ENCODE measurements at regions of chr5 and their contacts with region 1.

Region 1: GRCh38 chr5:17276445-17276844 is 59.0 kb downstream of the BASP1 start:
- DNase-seq: no peak
- ATAC-seq: no peak
- H3K4me3 Mint-ChIP-seq: peak overlapping the region; percentile 55
- H3K27ac Mint-ChIP-seq: peak overlapping the region; percentile 94
- H3K4me1 Mint-ChIP-seq: peaks cover 87% of the 10 kb centered on the region
- H3K27me3 Mint-ChIP-seq: no peaks in the 10 kb centered on the region
- CTCF ChIP-seq: no peak

Region 2: GRCh38 chr5:17228821-17229291 is 47.6 kb before region 1 on chr5:
- CTCF ChIA-PET with region 1: no interaction called
- POLR2A ChIA-PET with region 1: interaction called, 21 read pairs
- intact Hi-C with region 1: loop called (anchors 1 kb)
- DNase-seq: no peak
- ATAC-seq: peak; percentile 13
- H3K4me3 Mint-ChIP-seq: peak overlapping the region; percentile 63
- H3K27ac Mint-ChIP-seq: peak overlapping the region; percentile 92
- H3K4me1 Mint-ChIP-seq: peaks cover 92% of the 10 kb centered on the region
- H3K27me3 Mint-ChIP-seq: no peaks in the 10 kb centered on the region
- CTCF ChIP-seq: no peak

Region 3: GRCh38 chr5:17326600-17327037 is 50.2 kb after region 1 on chr5:
- CTCF ChIA-PET with region 1: no interaction called
- POLR2A ChIA-PET with region 1: no interaction called
- intact Hi-C with region 1: no loop called
- DNase-seq: no peak
- ATAC-seq: no peak
- H3K4me3 Mint-ChIP-seq: no peak overlapping the region
- H3K27ac Mint-ChIP-seq: no peak overlapping the region
- H3K4me1 Mint-ChIP-seq: no peaks in the 10 kb centered on the region
- H3K27me3 Mint-ChIP-seq: no peaks in the 10 kb centered on the region
- CTCF ChIP-seq: no peak

Region 4: GRCh38 chr5:17359451-17360011 is 83.1 kb after region 1 on chr5:
- CTCF ChIA-PET with region 1: interaction called, 6 read pairs
- POLR2A ChIA-PET with region 1: interaction called, 21 read pairs
- intact Hi-C with region 1: loop called (anchors 1 kb)
- DNase-seq: no peak
- ATAC-seq: no peak
- H3K4me3 Mint-ChIP-seq: no peak overlapping the region
- H3K27ac Mint-ChIP-seq: no peak overlapping the region
- H3K4me1 Mint-ChIP-seq: peaks cover 18% of the 10 kb centered on the region
- H3K27me3 Mint-ChIP-seq: no peaks in the 10 kb centered on the region
- CTCF ChIP-seq: no peak

Measured in activated B cell treated with CpG ODN at 0.5 μM for 24 hours (primary cell).